ENCODE measurements at regions of chr7 and their contacts with region 1.

Region 1: GRCh38 chr7:93242106-93242505 is 9.9 kb downstream of the VPS50 start:
- DNase-seq: no peak
- H3K4me3 ChIP-seq: no peak overlapping the region
- H3K27ac ChIP-seq: peak overlapping the region in 1 of 59 donors; percentile 6
- H3K27me3 ChIP-seq: no peaks in the 10 kb centered on the region
- CTCF ChIP-seq: no peak

Region 2: GRCh38 chr7:93544691-93545090 is 302.6 kb after region 1 on chr7:
- intact Hi-C with region 1: loop called in 1 of 2 experiments (anchors 5 kb)
- DNase-seq: peak in 1 of 10 donors; percentile 43
- H3K4me3 ChIP-seq: no peak overlapping the region
- H3K27ac ChIP-seq: no peak overlapping the region
- H3K27me3 ChIP-seq: no peaks in the 10 kb centered on the region
- CTCF ChIP-seq: no peak